Natural killer cell (primary cell): ENCODE measurements at regions of chr2 and their contacts with region 1.

Region 1: GRCh38 chr2:97740590-97741182 is 27.3 kb downstream of the ZAP70 start:
- DNase-seq: peak; percentile 50 to 71
- ATAC-seq: peak; percentile 49 to 63 (median 55)
- H3K4me3 ChIP-seq: no peak overlapping the region
- H3K4me3 Mint-ChIP-seq: peak overlapping the region; percentile 65
- H3K27ac ChIP-seq: peak overlapping the region; percentile 86
- H3K27ac Mint-ChIP-seq: peak overlapping the region; percentile 80 to 94
- H3K4me1 ChIP-seq: peaks cover 77% of the 10 kb centered on the region
- H3K4me1 Mint-ChIP-seq: peaks cover 74 to 82% of the 10 kb centered on the region in 2 donors
- H3K27me3 ChIP-seq: no peaks in the 10 kb centered on the region
- H3K27me3 Mint-ChIP-seq: no peaks in the 10 kb centered on the region
- CTCF ChIP-seq: peak; percentile 83

Region 2: DNA sequence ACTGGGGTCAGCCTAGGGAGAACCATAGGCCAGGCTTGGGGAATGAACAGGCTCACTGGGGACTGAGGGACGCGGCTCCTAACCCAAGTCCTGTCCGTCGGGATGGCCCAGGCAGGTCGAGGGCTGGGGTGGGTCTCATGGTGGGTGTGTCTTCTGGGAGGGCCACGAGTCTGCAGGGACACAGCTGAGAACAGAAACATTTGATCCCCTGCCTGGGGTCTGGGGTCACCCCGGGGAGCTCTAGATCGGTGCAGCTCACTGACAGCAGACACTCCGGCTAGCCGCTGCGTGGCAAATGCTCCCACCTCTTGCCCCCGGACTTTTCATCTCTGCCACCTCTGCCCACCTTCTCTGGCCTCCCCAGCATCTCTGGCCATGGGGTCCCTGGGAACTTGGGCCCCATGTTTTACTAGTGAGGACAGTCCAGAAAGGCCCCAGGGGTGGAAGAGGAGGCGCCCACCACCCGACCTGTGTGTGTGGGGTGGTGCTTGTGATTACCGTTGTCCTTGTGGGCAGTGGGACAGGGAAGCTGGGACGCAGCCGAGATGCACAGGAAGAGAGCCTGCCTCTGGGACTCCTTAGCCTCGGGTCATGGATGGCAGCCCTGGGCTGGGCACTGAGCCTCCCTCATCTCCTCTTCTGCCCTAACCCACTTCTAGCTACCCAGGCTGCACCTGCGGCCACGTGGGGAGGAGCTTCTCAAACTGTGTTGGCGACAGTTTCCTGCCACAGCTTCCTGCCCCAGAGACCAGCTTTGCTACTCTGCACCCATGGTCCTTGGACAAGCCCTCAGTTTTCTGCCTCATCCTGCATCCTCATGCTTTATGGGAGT is 22.4 kb before region 1 on chr2:
- intact Hi-C with region 1: loop called (anchors 1 kb)
- DNase-seq: peak; percentile 72 to 88
- ATAC-seq: peak; percentile 65 to 76 (median 76)
- H3K4me3 ChIP-seq: peak overlapping the region; percentile 69
- H3K4me3 Mint-ChIP-seq: peak overlapping the region; percentile 94
- H3K27ac ChIP-seq: peak overlapping the region; percentile 71
- H3K27ac Mint-ChIP-seq: peak overlapping the region; percentile 97
- H3K4me1 ChIP-seq: peaks cover 87% of the 10 kb centered on the region
- H3K4me1 Mint-ChIP-seq: peaks cover 89 to 91% of the 10 kb centered on the region in 2 donors
- H3K27me3 ChIP-seq: no peaks in the 10 kb centered on the region
- H3K27me3 Mint-ChIP-seq: no peaks in the 10 kb centered on the region
- CTCF ChIP-seq: no peak

Region 3: GRCh38 chr2:99559075-99559662 is 1818.5 kb after region 1 on chr2:
- intact Hi-C with region 1: no loop called
- DNase-seq: peak; percentile 74 to 86
- ATAC-seq: peak; percentile 96 to 100 (median 97)
- H3K4me3 ChIP-seq: no peak overlapping the region
- H3K4me3 Mint-ChIP-seq: no peak overlapping the region
- H3K27ac ChIP-seq: no peak overlapping the region
- H3K27ac Mint-ChIP-seq: no peak overlapping the region
- H3K4me1 ChIP-seq: no peaks in the 10 kb centered on the region
- H3K4me1 Mint-ChIP-seq: peaks cover 4 to 6% of the 10 kb centered on the region in 2 donors
- H3K27me3 ChIP-seq: no peaks in the 10 kb centered on the region
- H3K27me3 Mint-ChIP-seq: peaks cover 2 to 6% of the 10 kb centered on the region in 2 donors
- CTCF ChIP-seq: peak; percentile 98